ENCODE measurements at regions of chr11 and their contacts with region 1.

Region 1: DNA sequence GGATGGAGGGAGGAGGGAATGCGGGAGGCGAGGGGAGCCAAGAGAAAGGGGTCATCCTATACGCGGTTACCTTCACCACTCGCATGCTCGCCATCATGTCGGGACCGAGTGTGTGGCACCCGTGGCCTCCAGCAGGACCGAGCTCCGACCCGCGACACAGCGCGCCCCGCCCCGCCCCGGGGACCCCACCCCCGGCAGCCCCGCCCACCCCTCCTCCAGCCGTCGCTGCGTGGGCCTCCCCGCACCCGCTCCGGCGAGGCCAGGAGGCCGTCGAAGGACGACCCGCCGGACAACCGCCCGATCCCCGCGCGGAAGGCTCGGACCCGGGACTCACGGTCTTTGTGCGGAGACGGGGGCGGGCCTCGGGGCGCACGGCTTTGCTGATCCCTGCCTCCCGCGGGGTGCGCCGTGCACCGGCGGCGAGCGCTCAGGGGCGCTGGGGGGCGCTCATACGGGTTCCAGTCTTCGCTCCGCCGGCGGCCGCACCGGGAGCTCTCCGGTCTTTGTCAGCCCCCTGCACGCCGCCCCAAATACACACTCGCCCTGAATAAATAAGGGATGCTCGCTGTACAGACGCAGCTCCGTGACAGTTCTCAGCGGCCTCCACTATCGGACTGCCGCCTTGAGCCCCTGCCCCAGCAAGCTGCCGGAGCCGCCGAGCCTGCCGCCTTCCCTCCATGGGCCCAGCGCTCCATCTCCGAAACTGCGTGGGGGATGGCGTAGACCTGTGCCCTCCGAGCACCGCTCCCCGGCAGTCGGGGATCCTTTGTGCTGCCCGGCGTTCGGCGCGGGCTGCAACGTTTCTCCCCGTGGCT is at the start of gene UBE2L6:
- DNase-seq: no peak
- H3K4me3 ChIP-seq: peak within 1 kb of the TSS; percentile 56 to 86 (median 76)
- H3K27ac ChIP-seq: no peak within 1 kb of the TSS
- H3K4me1 ChIP-seq: peaks cover 10% of the 10 kb centered on the region
- H3K27me3 ChIP-seq: no peaks in the 10 kb centered on the region
- CTCF ChIP-seq: peak; percentile 33 to 93
- POLR2A ChIP-seq: no peak
- total RNA-seq, gene UBE2L6: 10.8 and 22.3 TPM in 2 replicates

Region 2: DNA sequence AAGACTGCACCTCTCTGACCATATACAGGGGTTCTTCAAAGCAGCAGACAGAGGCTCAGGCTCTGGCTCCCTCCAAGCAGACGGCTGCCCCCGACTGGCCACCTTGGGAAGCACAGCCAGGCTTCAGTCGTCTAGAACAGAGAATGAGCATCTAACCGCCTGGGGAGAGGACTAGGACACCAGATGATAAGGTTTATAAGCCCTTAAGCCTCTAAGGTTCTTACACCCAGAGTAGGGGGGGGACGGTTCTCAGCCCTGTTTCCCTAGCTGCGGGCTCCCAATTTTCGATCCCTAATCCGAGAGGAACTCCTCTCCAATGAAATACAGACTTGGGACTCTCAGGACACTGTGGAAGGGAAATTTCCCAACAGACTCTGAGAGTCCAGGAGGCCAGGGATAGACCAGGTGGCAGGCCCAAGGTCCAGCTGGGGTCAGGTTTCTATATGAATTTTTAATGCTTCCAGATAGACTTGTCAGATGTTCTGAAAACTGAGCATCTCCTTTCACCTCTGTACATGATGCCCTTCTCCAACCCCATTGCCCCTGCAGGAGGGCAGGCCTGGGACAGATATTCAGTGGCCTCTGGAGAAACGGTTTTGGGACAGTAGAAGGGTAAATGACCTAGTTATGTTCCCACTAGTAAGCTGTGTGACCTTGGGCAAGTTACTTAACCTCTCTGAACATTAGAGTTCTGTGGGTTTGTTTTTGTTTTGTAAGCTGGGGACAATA is 87.1 kb before region 1 on chr11:
- CTCF ChIA-PET with region 1: no interaction called
- POLR2A ChIA-PET with region 1: no interaction called
- dilution Hi-C with region 1: no loop called
- intact Hi-C with region 1: no loop called
- DNase-seq: peak; percentile 46
- H3K4me3 ChIP-seq: no peak overlapping the region
- H3K27ac ChIP-seq: no peak overlapping the region
- H3K4me1 ChIP-seq: peaks cover 9% of the 10 kb centered on the region
- H3K27me3 ChIP-seq: peaks cover 7 to 28% of the 10 kb centered on the region in 2 experiments
- CTCF ChIP-seq: peak; percentile 75 to 85
- POLR2A ChIP-seq: no peak

Region 3: DNA sequence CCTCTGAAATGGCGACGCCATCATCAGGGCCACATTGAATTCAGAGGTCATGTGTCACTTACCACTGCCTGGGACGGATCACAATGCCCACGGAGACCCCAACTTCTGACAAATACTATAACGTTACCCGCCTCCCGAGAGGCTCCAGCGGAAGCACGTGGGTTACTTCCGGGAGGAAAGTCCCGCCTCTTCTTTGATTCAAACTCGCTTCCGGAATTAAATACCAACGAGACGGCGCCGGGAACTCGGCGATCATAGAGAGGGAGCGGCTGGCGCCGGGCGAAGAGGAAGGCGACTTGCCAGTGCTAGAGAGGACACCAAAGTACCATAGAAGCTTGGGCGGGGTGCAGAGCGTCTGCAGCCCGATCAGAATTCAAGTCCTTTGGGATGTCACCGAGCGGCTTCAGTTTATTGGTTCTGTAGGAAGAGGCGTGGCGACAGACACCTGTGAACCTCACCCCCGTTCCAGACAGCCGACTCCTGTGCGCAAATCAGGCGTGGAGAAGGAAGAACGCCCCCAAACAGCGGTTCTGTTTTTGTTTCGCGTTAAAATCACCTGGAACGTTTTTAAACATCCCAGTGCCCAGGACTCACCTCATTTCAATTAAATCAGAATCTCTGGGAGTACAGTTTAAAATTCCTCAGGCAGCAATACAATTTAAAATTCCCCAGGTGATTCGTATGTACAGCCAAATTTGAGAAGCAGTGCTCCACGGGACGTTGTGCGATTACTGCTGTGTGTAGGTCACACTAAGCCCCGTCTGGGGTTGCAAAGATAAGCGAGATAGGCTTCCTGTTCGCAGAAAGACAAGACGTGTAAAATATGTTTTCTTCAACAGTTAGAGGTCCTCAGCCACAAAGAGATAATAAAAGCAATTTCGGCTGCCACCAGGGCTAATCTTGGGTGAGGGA is 36.9 kb before region 1 on chr11 and contains the start of gene TIMM10:
- CTCF ChIA-PET with region 1: interaction called, 6 read pairs
- POLR2A ChIA-PET with region 1: no interaction called
- dilution Hi-C with region 1: no loop called
- intact Hi-C with region 1: loop called (anchors 1 kb)
- DNase-seq: peak; percentile 96
- H3K4me3 ChIP-seq: peak within 1 kb of the TSS; percentile 53 to 74 (median 69)
- H3K27ac ChIP-seq: peak within 1 kb of the TSS; percentile 48
- H3K4me1 ChIP-seq: peaks cover 21% of the 10 kb centered on the region
- H3K27me3 ChIP-seq: peaks cover 0 to 2% of the 10 kb centered on the region in 2 experiments
- CTCF ChIP-seq: no peak
- POLR2A ChIP-seq: peak; percentile 45
- total RNA-seq, gene TIMM10: 64.2 and 105 TPM in 2 replicates

Region 4: DNA sequence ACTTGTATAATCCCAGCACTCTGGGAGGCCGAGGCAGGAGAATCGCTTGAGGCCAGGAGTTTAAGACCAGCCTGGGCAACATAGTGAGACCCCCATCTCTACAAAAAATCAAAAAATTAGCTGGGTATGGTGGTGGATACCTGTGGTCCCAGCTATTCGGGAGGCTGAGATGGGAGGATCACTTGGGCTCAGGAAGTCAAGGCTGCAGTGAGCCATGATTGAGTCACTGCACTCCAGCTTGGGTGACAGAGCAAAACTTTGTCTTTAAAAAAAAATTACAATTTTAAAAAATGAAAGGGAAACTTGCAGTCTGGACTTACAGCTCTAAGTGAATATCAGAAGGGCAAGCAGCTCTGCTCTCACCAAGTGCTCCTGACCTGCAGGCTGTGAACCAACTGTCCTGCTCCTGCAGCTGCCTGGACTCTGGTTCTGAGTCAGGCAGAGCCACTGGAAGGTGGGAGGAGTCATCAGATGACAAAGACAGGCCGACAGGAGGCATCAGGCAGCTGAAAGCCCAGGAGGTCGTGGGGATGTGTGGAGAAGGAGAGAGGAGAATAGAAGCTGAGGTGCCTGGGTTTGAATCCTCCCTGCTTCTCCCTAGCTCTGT is 20.8 kb before region 1 on chr11:
- CTCF ChIA-PET with region 1: interaction called, 12 read pairs
- POLR2A ChIA-PET with region 1: no interaction called
- dilution Hi-C with region 1: no loop called
- intact Hi-C with region 1: no loop called
- DNase-seq: peak; percentile 12
- H3K4me3 ChIP-seq: no peak overlapping the region
- H3K27ac ChIP-seq: no peak overlapping the region
- H3K4me1 ChIP-seq: no peaks in the 10 kb centered on the region
- H3K27me3 ChIP-seq: peaks cover 0 to 2% of the 10 kb centered on the region in 2 experiments
- CTCF ChIP-seq: no peak
- POLR2A ChIP-seq: no peak

Region 5: DNA sequence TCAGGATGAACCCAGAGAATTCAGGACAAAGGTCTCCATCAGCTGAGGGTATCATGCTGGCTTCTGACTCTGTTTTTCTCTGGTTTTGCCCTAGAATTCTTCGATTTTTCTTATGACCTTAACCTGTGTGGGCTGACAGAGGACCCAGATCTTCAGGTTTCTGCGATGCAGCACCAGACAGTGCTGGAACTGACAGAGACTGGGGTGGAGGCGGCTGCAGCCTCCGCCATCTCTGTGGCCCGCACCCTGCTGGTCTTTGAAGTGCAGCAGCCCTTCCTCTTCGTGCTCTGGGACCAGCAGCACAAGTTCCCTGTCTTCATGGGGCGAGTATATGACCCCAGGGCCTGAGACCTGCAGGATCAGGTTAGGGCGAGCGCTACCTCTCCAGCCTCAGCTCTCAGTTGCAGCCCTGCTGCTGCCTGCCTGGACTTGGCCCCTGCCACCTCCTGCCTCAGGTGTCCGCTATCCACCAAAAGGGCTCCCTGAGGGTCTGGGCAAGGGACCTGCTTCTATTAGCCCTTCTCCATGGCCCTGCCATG is 46.6 kb after region 1 on chr11:
- CTCF ChIA-PET with region 1: interaction called, 10 read pairs
- POLR2A ChIA-PET with region 1: no interaction called
- dilution Hi-C with region 1: no loop called
- intact Hi-C with region 1: no loop called
- DNase-seq: no peak
- H3K4me3 ChIP-seq: no peak overlapping the region
- H3K27ac ChIP-seq: no peak overlapping the region
- H3K4me1 ChIP-seq: no peaks in the 10 kb centered on the region
- H3K27me3 ChIP-seq: peaks cover 0 to 4% of the 10 kb centered on the region in 2 experiments
- CTCF ChIP-seq: no peak
- POLR2A ChIP-seq: no peak

Region 6: GRCh38 chr11:57644748-57645688 is 77.3 kb after region 1 on chr11:
- CTCF ChIA-PET with region 1: interaction called, 154 read pairs
- POLR2A ChIA-PET with region 1: interaction called, 4 read pairs
- dilution Hi-C with region 1: no loop called
- intact Hi-C with region 1: loop called (anchors 1 kb)
- DNase-seq: peak; percentile 68
- H3K4me3 ChIP-seq: no peak overlapping the region
- H3K27ac ChIP-seq: no peak overlapping the region
- H3K4me1 ChIP-seq: peaks cover 14% of the 10 kb centered on the region
- H3K27me3 ChIP-seq: peaks cover 38 to 44% of the 10 kb centered on the region in 2 experiments
- CTCF ChIP-seq: peak; percentile 78 to 86
- POLR2A ChIP-seq: no peak

Region 7: DNA sequence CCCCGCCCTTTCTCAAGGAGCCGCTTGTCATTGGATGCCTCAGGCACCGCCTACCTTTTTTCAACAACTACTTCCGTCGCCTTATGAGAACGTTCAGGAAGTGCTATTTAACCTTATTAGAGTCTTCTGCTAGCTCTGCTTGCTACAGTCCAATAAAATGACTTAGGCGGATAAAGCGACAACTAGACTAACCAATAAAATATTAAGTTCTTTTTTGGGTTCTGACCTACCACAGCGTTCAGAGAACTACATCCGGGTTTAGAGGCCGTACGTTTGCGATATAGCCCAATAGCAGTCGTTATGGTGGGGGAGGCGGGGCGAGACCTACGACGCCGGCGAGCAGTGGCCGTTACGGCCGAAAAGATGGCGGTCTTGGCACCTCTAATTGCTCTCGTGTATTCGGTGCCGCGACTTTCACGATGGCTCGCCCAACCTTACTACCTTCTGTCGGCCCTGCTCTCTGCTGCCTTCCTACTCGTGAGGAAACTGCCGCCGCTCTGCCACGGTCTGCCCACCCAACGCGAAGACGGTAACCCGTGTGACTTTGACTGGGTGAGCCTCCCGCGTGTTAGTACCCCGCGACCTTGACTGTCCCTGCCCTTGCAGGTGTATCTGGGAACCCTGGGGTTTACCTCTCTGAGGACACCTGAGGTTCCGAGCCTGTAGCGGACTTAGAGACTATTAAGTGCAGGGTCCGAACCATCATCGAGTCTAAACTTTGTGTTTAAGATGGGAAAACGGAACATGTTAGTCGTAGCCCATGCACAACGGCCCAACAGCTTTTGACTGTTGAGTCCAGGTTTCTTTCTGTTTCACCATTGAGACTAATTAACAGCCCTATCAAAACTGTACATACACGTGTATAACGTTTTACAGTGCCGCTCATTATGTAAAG is 144.8 kb after region 1 on chr11 and contains the start of gene TMX2:
- CTCF ChIA-PET with region 1: no interaction called
- POLR2A ChIA-PET with region 1: no interaction called
- dilution Hi-C with region 1: no loop called
- intact Hi-C with region 1: loop called (anchors 1 kb)
- DNase-seq: peak; percentile 99
- H3K4me3 ChIP-seq: peak within 1 kb of the TSS; percentile 64 to 100 (median 78)
- H3K27ac ChIP-seq: peak within 1 kb of the TSS; percentile 67
- H3K4me1 ChIP-seq: peaks cover 18% of the 10 kb centered on the region
- H3K27me3 ChIP-seq: no peaks in the 10 kb centered on the region
- CTCF ChIP-seq: no peak
- POLR2A ChIP-seq: no peak
- total RNA-seq, gene TMX2: 66.3 and 67.7 TPM in 2 replicates

Region 8: GRCh38 chr11:58513747-58514367 is 946.1 kb after region 1 on chr11:
- CTCF ChIA-PET with region 1: interaction called, 11 read pairs
- POLR2A ChIA-PET with region 1: no interaction called
- dilution Hi-C with region 1: no loop called
- intact Hi-C with region 1: loop called (anchors 1 kb)
- DNase-seq: peak; percentile 73
- H3K4me3 ChIP-seq: no peak overlapping the region
- H3K27ac ChIP-seq: no peak overlapping the region
- H3K4me1 ChIP-seq: no peaks in the 10 kb centered on the region
- H3K27me3 ChIP-seq: peaks cover 18 to 32% of the 10 kb centered on the region in 2 experiments
- CTCF ChIP-seq: peak; percentile 57 to 68
- POLR2A ChIP-seq: no peak